ENCODE measurements at regions of chr3 and their contacts with region 1.

Region 1: GRCh38 chr3:8416965-8417364 is 84.7 kb upstream of the LMCD1 start:
- DNase-seq: no peak
- ATAC-seq: no peak
- H3K4me3 Mint-ChIP-seq: no peak overlapping the region
- H3K27ac Mint-ChIP-seq: no peak overlapping the region
- H3K4me1 Mint-ChIP-seq: no peaks in the 10 kb centered on the region
- H3K27me3 Mint-ChIP-seq: no peaks in the 10 kb centered on the region

Region 2: GRCh38 chr3:8239718-8240695 is 177.0 kb before region 1 on chr3:
- CTCF ChIA-PET with region 1: interaction called, 26 read pairs
- POLR2A ChIA-PET with region 1: no interaction called
- DNase-seq: peak; percentile 46
- ATAC-seq: peak; percentile 65
- H3K4me3 Mint-ChIP-seq: no peak overlapping the region
- H3K27ac Mint-ChIP-seq: no peak overlapping the region
- H3K4me1 Mint-ChIP-seq: no peaks in the 10 kb centered on the region
- H3K27me3 Mint-ChIP-seq: no peaks in the 10 kb centered on the region

Region 3: DNA sequence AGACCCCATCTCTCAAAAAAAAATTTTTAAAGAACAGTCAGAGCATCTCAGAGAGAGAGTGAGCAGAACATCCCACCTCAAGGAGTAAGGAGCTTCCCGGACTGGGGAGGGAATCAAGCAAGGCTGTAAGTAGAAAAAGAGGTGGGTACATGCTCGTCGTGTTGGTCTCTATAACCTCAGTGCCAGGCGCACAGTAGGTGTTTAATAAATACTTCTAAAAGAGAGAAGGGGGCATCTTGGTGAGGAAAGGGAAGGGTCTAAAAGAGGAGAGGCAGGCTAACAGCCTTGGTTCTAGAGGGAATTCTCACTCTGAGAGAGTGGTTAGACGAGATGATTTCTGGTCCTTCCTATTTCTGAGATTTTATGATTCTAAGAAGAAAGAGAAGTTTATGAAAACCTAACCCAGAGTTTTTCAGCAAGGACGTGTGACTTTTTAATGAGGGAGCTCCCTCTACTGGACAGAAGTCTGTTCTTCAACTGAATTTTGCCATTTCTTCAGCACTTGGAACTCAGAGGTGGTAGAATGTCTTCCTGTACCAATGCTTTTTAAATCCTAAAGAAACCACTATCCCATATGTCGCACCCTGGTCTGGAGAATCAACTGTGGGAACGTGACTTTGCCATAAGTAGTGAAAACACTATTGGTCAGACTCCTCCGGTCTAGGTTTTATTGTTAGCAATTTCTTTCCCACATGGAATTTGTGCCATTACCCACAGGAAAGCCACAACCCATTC is 115.1 kb before region 1 on chr3:
- CTCF ChIA-PET with region 1: interaction called, 21 read pairs
- POLR2A ChIA-PET with region 1: no interaction called
- DNase-seq: no peak
- ATAC-seq: no peak
- H3K4me3 Mint-ChIP-seq: no peak overlapping the region
- H3K27ac Mint-ChIP-seq: no peak overlapping the region
- H3K4me1 Mint-ChIP-seq: no peaks in the 10 kb centered on the region
- H3K27me3 Mint-ChIP-seq: no peaks in the 10 kb centered on the region

Region 4: GRCh38 chr3:8324740-8325139 is 92.2 kb before region 1 on chr3:
- CTCF ChIA-PET with region 1: interaction called, 160 read pairs
- POLR2A ChIA-PET with region 1: interaction called, 3 read pairs
- DNase-seq: peak; percentile 54
- ATAC-seq: peak; percentile 75
- H3K4me3 Mint-ChIP-seq: no peak overlapping the region
- H3K27ac Mint-ChIP-seq: no peak overlapping the region
- H3K4me1 Mint-ChIP-seq: no peaks in the 10 kb centered on the region
- H3K27me3 Mint-ChIP-seq: no peaks in the 10 kb centered on the region

Region 5: GRCh38 chr3:9508781-9509180 is 1091.8 kb after region 1 on chr3:
- CTCF ChIA-PET with region 1: no interaction called
- POLR2A ChIA-PET with region 1: no interaction called
- DNase-seq: no peak
- ATAC-seq: no peak
- H3K4me3 Mint-ChIP-seq: no peak overlapping the region
- H3K27ac Mint-ChIP-seq: no peak overlapping the region
- H3K4me1 Mint-ChIP-seq: no peaks in the 10 kb centered on the region
- H3K27me3 Mint-ChIP-seq: peaks cover 17% of the 10 kb centered on the region